GM12878 (cell line): ENCODE measurements at regions of chr16 and their contacts with region 1.

Region 1: DNA sequence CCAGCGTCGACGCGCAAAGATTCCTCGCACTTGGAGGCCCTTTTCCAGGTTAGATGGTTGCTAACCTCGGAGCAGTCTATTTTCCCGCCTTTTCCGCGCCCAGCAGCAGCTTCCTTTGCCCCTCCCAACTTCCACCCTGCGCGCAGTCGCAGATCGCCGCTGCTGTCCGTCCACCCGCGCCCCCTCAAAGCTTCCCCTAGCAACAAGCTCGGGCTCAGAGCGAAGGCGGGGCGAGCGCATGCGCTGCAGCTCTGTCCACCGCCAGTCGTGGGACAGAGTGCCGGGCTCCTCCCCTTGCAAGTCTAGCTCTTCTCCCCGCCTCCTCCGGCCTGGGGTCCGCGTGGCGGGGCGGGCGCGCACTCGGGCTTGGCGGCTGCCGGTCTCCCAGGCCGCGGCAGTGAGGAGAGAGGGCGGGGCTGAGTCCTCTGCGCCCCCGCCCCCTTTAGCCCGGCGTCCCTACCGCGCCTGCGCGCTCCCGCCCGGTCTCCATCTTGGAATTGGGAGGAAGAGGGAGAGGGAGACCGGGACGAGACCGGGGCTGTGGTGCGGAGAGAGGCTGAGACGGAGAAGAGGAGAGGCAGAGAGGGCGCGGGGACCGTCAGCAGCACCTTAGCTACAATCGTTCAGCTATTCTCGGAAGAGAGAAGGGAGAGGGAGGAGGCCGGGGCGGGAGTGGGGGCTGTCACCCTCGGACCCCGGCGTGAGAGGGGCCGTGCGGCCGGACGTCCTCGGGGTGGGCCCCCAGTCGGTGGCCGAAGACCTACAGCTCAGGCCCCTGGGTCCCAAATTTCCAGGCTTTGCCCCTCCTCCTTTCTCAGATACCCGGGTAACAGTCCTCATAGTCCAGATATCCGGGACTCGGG is at the start of gene TAOK2:
- DNase-seq: peak; percentile 92
- ATAC-seq: peak; percentile 98
- H3K4me3 ChIP-seq: peak within 1 kb of the TSS; percentile 99
- H3K27ac ChIP-seq: peak within 1 kb of the TSS; percentile 90
- H3K4me1 ChIP-seq: peaks cover 9% of the 10 kb centered on the region
- H3K27me3 ChIP-seq: no peaks in the 10 kb centered on the region
- CTCF ChIP-seq: no peak
- EP300 ChIP-seq: no peak
- POLR2A ChIP-seq: peak; percentile 85
- RAD21 ChIP-seq: no peak
- polyA plus RNA-seq, gene TAOK2: 0.14 to 0.51 TPM

Region 2: GRCh38 chr16:29645694-29646187 is 327.9 kb before region 1 on chr16:
- CTCF ChIA-PET with region 1: no interaction called
- POLR2A ChIA-PET with region 1: no interaction called
- RAD21 ChIA-PET with region 1: no interaction called
- SMC1A ChIA-PET with region 1: no interaction called
- in situ Hi-C with region 1: no loop called
- intact Hi-C with region 1: no loop called
- DNase-seq: peak; percentile 83
- ATAC-seq: peak; percentile 77
- H3K4me3 ChIP-seq: no peak overlapping the region
- H3K27ac ChIP-seq: peak overlapping the region; percentile 90
- H3K4me1 ChIP-seq: peaks cover 45% of the 10 kb centered on the region
- H3K27me3 ChIP-seq: no peaks in the 10 kb centered on the region
- CTCF ChIP-seq: no peak
- EP300 ChIP-seq: no peak
- POLR2A ChIP-seq: peak; percentile 52
- RAD21 ChIP-seq: no peak

Region 3: GRCh38 chr16:29961479-29962343 is 11.9 kb before region 1 on chr16 and contains the start of gene TMEM219:
- CTCF ChIA-PET with region 1: interaction called, 21 read pairs
- POLR2A ChIA-PET with region 1: interaction called, 53 read pairs
- RAD21 ChIA-PET with region 1: interaction called, 19 read pairs
- SMC1A ChIA-PET with region 1: interaction called, 20 read pairs
- in situ Hi-C with region 1: no loop called
- intact Hi-C with region 1: no loop called
- DNase-seq: peak; percentile 70
- ATAC-seq: peak; percentile 92
- H3K4me3 ChIP-seq: peak within 1 kb of the TSS; percentile 82
- H3K27ac ChIP-seq: peak within 1 kb of the TSS; percentile 79
- H3K4me1 ChIP-seq: peaks cover 2% of the 10 kb centered on the region; the same call in 1 of the 2 replicates
- H3K27me3 ChIP-seq: no peaks in the 10 kb centered on the region
- CTCF ChIP-seq: peak; percentile 17 to 32 (median 22); a peak in 2 of 6 replicates
- EP300 ChIP-seq: no peak
- POLR2A ChIP-seq: peak; percentile 80
- RAD21 ChIP-seq: no peak
- polyA plus RNA-seq, gene TMEM219: 43.0 to 56.5 TPM

Region 4: DNA sequence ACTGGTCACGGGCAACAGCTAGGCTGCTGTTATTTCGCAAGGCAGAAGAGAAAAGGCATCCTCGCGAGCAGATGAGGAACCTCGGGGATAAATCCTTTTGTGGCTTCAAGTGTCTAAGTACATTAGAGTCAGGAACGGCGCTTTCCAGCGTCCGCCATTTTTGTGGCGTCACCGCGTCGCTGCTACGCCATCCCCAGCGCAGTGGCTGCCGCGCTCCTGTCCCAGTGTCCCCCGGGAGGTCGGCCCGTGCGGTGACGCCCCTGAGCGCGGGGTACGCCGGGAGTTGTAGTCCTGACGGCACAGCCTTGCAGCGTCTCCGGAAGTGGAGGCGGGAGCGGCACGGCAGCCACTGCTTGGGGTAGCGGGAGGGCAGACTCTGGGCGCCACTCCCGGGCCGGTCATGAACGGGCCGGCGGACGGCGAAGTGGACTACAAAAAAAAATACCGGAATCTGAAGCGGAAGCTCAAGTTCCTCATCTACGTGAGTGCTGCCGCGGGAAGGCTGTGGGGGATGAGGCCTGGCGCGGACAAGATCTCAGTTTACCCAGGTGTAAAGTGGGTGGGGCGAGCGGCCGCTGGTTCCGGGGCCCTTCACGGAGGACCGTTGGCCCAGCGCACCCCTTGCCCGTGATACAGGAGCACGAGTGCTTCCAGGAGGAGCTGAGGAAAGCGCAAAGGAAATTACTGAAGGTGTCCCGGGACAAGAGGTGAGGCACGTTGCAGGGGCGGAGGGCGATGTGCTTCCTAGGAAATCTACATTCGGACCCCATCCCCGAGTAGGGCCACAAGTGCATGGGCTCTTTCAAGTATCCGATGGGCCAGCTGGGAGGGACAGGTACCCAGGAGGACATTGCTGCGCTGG is 22.5 kb after region 1 on chr16 and contains the start of gene INO80E:
- CTCF ChIA-PET with region 1: interaction called, 6 read pairs
- POLR2A ChIA-PET with region 1: interaction called, 16 read pairs
- RAD21 ChIA-PET with region 1: interaction called, 5 read pairs
- SMC1A ChIA-PET with region 1: interaction called, 9 read pairs
- in situ Hi-C with region 1: no loop called
- intact Hi-C with region 1: no loop called
- DNase-seq: peak; percentile 88
- ATAC-seq: peak; percentile 96
- H3K4me3 ChIP-seq: peak within 1 kb of the TSS; percentile 81
- H3K27ac ChIP-seq: peak within 1 kb of the TSS; percentile 91
- H3K4me1 ChIP-seq: peaks cover 9% of the 10 kb centered on the region
- H3K27me3 ChIP-seq: no peaks in the 10 kb centered on the region
- CTCF ChIP-seq: no peak
- EP300 ChIP-seq: 0 out of 4 replicates have a peak, but pooled peaks of 1 of the 2 experiments have one; percentile 6
- POLR2A ChIP-seq: peak; percentile 86
- RAD21 ChIP-seq: no peak
- polyA plus RNA-seq, gene INO80E: 0.39 to 0.90 TPM

Region 5: DNA sequence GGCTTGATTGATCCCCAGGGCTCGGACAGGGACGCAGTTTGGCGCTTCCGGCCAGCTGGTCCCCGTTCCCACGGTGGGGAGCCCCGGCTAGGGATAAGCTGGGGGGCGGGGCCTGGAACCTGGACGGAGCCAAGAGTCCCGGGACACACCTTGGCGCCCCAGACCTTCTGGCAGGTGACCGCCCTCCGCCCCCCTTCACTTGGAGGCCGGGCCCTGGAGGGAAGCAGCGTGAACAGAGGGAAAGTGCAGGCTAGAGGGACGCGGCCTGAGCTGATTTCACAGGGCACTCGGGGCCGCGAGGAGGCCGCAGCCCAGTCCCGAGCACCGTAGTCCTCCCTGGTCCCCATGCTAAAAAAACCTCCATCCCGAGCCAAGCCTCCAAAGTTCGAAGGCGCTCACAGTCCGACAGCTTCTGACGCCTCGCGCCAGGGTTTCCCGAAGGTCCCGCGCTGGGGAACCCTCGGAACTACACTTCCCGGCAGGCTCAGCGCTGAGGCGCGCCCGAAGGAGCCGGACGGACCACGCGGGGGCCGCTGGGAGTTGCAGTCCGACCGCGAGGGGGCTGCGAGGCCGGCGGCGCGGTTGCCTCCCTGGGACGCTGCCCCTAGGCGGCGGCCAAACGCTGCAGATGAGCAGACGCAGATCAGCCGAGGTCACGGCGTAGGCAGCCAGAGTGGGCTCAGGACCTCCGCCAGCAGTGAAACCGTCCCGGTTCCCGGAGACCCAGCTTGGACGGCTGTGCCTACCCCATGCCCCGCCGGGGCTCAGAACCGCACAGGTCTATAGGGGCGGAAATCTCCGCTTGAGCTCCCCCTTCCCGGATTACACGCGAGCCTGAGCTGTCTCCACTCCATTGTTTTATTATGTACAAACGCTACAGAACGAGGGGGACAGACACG is 118.1 kb after region 1 on chr16 and contains the start of gene TBX6:
- CTCF ChIA-PET with region 1: no interaction called
- POLR2A ChIA-PET with region 1: no interaction called
- RAD21 ChIA-PET with region 1: no interaction called
- SMC1A ChIA-PET with region 1: no interaction called
- in situ Hi-C with region 1: no loop called
- intact Hi-C with region 1: no loop called
- DNase-seq: peak; percentile 64
- ATAC-seq: peak; percentile 88
- H3K4me3 ChIP-seq: peak within 1 kb of the TSS; percentile 72
- H3K27ac ChIP-seq: peak within 1 kb of the TSS; percentile 88
- H3K4me1 ChIP-seq: peaks cover 26% of the 10 kb centered on the region
- H3K27me3 ChIP-seq: no peaks in the 10 kb centered on the region
- CTCF ChIP-seq: peak; percentile 82 to 95 (median 83)
- EP300 ChIP-seq: no peak
- POLR2A ChIP-seq: peak; percentile 84
- RAD21 ChIP-seq: peak; percentile 58
- polyA plus RNA-seq, gene TBX6: not detected